ENCODE measurements at regions of chr13 and their contacts with region 1.

Region 1: DNA sequence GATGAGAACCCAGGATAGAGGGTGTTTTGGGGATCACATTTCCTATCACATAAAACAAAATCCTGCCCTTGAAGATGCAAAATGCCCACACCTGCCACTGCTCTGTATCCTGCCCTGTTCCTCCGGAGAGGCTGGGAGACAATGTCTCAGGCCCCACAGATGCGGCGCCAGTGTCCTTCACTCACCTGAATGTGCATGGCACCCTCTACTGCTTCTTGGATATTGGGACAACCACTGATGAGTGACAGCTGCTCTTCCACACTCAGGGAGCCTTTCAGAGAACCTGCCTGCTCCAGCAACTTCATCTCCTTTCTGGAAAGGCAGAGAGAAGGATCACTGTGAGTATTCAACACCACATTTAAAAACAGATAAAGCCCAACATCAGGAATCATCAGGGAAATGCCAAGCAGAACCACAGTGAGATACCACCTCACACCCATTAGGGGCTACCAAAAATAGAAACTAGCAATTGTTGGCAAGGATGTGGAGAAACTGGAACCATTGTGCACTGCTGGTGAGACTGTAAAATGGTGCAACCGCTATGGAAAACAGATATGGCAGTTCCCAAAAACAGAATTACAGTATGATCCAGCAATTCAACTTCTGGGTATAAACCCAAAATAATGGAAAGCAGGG is 36.4 kb downstream of the CRYL1 start:
- DNase-seq: peak in 4 of 10 donors; percentile 34 to 87 (median 51)

Region 2: GRCh38 chr13:20182231-20182846 is 307.0 kb before region 1 on chr13:
- intact Hi-C with region 1: loop called (anchors 5 kb)
- DNase-seq: peak in 5 of 10 donors; percentile 25 to 82 (median 51)

Region 3: GRCh38 chr13:20411638-20412360 is 77.5 kb before region 1 on chr13:
- intact Hi-C with region 1: no loop called
- DNase-seq: peak in 1 of 10 donors; percentile 39

Region 4: DNA sequence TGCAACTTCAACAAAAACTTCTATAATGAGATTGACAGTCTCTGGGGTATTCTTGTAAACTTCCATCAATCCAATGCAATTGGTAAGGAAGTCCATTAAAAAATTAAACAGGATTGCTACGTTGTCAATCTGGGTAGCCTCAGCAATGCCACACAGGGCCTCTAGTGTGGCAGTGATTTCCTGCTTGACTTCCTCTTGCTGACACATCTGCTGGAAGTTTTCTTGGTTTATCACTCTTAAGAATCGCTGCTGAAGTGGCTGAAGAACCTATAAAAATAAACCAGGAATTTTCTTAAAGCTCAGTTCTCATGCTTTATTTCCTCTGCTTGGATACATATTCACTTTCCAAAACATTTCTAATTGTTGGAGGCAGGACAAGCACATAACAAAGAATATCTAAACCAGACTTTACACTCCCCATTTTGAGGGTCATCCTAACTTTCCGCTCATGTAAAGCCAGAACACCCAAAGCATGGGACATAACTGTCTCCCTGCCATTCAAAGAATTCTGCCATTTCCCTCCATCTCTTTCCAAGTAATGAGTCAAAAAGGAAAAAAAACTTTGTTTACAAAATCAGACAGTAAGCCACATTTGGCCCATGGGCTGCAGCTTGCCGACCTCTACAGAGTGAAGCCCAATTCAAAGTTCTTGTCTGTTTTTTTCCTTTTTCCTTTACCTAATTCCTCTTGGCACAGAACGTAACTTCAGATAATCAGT is 307.6 kb after region 1 on chr13:
- intact Hi-C with region 1: no loop called
- DNase-seq: peak in 1 of 10 donors; percentile 37

Measured in posterior cingulate gyrus (tissue), 11 donors.